ENCODE measurements at regions of chrX and their contacts with region 1.

Region 1: DNA sequence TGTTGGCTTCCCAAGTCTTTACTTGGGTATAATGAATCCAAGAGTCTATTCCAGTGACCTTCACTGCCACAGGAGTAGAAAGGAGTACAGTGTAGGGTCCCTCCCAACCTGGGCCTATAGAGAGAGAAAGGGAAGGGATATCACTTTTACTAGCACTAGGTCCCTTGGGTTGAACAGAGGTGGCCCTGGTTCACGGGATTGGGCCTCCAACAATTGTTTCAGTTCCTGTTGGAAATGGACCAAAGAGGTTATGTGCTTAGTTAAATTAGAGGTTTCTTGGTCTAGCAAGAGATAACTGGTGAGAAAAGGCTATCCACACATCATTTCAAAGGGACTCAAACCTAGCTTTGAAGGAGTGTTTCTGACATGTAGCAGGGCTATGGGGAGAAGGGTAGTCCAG is 57.1 kb upstream of the MED14 start:
- DNase-seq: no peak
- H3K4me3 ChIP-seq: no peak overlapping the region
- H3K27ac ChIP-seq: no peak overlapping the region
- H3K4me1 ChIP-seq: peaks cover 0 to 7% (median 0%) of the 10 kb centered on the region in 4 donors
- H3K27me3 ChIP-seq: no peaks in the 10 kb centered on the region
- CTCF ChIP-seq: no peak

Region 2: DNA sequence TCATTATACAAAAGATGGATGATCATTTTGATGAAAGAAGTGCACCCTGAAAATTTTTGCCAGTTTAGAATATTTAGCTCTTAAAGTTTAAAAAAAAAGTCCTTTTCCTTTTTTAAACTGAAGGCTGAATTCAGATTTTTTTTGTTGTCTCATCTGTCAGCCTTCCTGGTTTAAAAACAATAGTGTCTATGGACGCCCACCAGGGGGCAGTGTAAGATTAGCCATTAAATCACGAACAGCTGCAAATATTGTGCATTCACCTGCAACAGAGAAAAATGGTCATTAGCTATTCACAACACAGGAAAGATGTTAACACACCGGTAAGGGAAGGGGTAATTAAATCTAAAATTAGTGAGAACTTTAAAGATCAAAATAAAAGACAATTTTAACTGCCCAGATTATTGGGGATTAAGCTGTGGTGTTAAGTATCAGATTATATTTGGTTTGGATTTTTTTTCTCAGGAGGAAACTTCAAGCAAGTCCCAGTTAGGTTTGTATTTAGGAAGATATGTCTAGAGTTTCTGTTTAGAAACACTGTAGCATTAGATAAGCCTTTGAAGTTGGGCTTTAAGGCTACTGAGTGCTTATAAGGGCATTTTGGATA is 140.7 kb before region 1 on chrX:
- intact Hi-C with region 1: loop called (anchors 2 kb)
- DNase-seq: peak in 1 of 2 donors; percentile 63
- H3K4me3 ChIP-seq: no peak overlapping the region
- H3K27ac ChIP-seq: no peak overlapping the region
- H3K4me1 ChIP-seq: peaks cover 0 to 12% (median 5%) of the 10 kb centered on the region in 4 donors
- H3K27me3 ChIP-seq: no peaks in the 10 kb centered on the region
- CTCF ChIP-seq: peak; percentile 52 to 73

Region 3: DNA sequence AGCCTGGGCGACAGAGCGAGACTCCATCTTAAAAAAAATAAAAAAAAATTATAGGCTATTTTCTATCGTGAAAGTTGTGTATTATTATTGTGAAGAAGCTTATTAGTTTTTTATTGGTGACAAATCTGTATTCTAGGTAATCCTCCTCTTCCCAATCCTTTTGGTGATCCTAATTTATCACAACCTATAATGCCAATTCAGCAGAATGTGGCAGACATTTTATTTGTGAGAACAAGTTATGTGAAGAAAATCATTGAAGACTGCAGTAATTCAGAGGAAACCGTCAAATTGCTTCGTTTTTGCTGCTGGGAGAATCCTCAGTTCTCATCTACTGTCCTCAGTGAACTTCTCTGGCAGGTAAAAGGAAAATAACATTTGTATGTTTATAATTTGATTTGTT is 432.2 kb after region 1 on chrX:
- intact Hi-C with region 1: no loop called
- DNase-seq: no peak
- H3K4me3 ChIP-seq: no peak overlapping the region
- H3K27ac ChIP-seq: no peak overlapping the region
- H3K4me1 ChIP-seq: no peaks in the 10 kb centered on the region
- H3K27me3 ChIP-seq: no peaks in the 10 kb centered on the region
- CTCF ChIP-seq: no peak

Measured in tibial artery (tissue), 4 donors.